Aorta (tissue), 5 donors: ENCODE measurements at regions of chr7 and their contacts with region 1.

Region 1: DNA sequence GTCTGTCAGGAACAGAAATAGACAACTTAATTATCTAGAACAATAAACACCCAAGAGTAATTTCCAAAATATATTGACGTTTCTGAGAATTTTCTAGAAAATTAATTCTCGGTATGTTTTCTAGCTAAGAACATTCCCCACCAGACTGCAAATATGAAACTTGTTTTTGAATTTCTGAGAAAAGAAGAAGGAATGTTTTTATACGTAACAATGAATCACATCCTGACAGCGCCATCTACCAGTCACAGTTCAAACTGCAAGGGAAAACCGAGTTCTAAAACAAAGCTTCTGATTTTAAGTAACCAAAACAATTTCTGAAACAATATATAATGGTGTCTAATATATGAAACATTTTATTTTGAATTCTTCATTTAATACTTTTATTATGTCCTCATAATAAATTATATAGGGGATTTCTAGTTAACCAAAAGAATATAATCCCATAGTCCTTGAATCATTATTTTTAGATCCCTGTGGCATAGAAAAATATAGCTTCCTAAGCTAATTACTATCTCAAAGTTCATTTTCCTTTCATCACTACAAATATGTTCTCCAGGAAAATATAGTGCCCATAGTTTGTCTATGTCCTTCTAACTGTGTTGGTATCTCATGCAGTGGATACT is 34.5 kb upstream of the MEOX2 start:
- DNase-seq: no peak
- ATAC-seq: no peak
- H3K4me3 ChIP-seq: no peak overlapping the region
- H3K27ac ChIP-seq: no peak overlapping the region
- H3K4me1 ChIP-seq: no peaks in the 10 kb centered on the region
- H3K27me3 ChIP-seq: no peaks in the 10 kb centered on the region

Region 2: DNA sequence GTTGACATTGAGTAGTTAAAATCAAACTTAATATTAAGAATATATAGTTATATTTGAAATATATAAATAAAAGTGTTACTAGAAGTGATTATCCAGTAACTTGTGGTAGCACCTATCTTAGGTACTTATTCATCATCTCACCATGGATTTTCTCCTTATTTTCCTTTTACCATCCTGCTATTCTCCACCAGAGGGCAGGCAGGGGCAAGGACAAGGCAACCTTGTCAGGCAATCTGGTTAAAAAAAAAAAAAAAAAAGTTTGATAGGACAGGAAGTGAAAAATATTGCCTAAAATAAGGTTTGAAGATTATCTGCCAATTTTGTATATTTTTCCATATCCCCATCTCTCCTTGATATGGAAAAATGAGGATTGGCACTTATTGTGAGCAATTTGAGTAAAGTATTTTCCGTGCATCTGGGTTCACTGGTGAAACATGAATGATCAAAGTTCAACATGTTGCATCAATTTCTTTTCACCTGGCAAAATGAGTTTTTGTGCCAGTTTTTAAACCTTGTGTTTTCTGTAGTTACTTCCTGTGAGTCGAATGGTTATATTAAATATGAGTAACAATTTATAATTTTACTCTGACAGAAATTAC is 415.9 kb before region 1 on chr7:
- intact Hi-C with region 1: loop called in 1 of 2 experiments (anchors 10 kb)
- DNase-seq: peak in 1 of 2 donors; percentile 51
- ATAC-seq: no peak
- H3K4me3 ChIP-seq: no peak overlapping the region
- H3K27ac ChIP-seq: no peak overlapping the region
- H3K4me1 ChIP-seq: no peaks in the 10 kb centered on the region
- H3K27me3 ChIP-seq: no peaks in the 10 kb centered on the region

Region 3: DNA sequence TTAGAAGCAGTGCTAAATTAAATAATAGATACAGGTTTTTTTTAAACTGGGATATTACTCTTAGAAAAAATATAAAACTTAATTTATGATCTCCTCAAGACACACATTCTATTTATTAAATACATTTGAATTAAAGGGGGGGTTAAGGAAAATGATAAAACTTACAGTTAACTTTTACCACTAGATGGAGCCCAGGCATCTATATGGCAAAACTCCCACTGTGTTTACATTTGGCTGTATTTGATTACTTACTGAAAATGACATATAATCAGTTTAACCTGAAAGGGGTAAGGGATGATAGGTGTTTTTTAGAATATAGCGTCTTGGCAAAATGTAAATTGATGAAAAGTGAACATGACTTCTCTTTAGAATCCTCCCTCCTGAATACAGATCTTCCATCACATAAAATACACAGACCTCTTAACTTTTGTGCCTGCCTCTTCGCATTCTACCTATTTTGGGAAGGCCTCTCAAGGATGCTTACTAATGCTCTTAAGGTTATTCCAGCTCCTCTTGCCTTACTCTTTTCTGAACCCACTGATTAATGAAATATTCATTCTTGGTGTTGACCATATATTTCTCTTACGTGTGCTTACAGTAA is 394.8 kb before region 1 on chr7:
- intact Hi-C with region 1: loop called in 1 of 2 experiments (anchors 10 kb)
- DNase-seq: no peak
- ATAC-seq: no peak
- H3K4me3 ChIP-seq: no peak overlapping the region
- H3K27ac ChIP-seq: no peak overlapping the region
- H3K4me1 ChIP-seq: no peaks in the 10 kb centered on the region
- H3K27me3 ChIP-seq: no peaks in the 10 kb centered on the region

Region 4: DNA sequence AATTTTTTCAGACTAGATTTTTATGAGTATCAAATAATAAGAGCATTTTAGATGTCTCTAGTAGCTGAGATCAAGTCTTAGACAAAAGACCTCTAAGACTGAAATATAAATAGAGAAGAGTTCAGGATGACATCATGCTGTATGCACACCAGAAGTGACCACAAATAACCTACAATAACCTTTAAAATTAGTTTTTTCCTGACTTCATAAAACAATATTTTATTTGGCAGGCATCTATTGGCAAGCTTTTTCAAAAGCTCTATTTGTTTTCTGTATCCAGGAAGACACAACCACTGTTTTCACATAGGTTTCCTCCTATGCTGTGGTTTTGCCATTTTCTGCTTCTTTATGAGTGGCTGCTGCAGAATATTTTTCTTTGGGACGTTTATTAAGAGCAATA is 341.3 kb after region 1 on chr7:
- intact Hi-C with region 1: loop called (anchors 10 kb)
- DNase-seq: no peak
- ATAC-seq: peak; percentile 69
- H3K4me3 ChIP-seq: no peak overlapping the region
- H3K27ac ChIP-seq: no peak overlapping the region
- H3K4me1 ChIP-seq: peaks cover 0 to 2% of the 10 kb centered on the region in 2 donors
- H3K27me3 ChIP-seq: no peaks in the 10 kb centered on the region